ENCODE measurements at regions of chr6 and their contacts with region 1.

Region 1: DNA sequence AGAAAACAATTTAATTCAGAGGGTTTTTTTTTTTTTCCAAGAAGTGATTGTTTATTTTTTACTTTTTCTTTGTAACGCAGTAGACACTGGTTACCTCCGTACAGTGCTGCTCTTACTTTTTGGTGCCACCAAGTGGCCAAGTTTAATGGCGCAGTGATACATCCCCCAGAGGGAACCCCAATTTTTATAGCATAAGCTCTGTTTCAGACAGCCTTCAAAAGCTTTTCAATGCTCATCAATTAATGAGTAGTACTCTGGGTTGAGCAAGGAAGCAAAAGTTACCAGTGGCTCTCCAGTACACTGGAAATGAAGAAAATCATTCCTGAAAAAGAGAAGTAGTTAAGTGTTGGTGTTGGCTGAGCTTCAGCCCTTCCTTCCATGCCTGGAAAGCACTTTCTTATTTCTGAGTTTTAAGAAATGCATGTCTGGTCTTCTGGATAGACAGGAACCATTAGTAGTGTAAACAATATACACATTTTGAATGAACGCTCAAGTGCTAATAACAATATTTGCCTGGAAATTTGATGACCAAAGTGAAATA is 129.1 kb upstream of the SMLR1 start:
- DNase-seq: peak; percentile 75
- ATAC-seq: peak; percentile 98
- H3K4me3 Mint-ChIP-seq: no peak overlapping the region
- H3K27ac Mint-ChIP-seq: no peak overlapping the region
- H3K4me1 Mint-ChIP-seq: peaks cover 12% of the 10 kb centered on the region
- H3K27me3 Mint-ChIP-seq: no peaks in the 10 kb centered on the region

Region 2: DNA sequence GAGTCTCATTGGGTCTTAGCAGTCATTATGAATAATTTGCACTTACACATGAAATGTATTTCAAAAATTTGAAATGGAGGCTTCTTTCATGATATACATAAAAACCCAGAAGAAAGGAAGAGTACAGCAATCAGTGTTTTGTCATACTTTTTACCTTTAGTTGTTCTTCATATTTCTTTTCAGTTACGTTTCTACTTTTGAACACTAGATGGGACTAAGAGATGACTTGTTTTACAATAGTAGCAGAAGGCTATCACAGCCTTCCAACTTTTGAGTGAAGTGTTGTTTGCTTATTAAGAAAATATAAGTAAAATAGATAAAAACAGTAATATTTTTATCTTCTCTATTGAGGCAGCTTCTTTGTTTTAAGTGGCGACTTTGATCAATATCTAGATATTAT is 621.6 kb before region 1 on chr6:
- CTCF ChIA-PET with region 1: no interaction called
- POLR2A ChIA-PET with region 1: no interaction called
- intact Hi-C with region 1: loop called in 1 of 2 experiments (anchors 10 kb)
- DNase-seq: no peak
- ATAC-seq: no peak
- H3K4me3 Mint-ChIP-seq: no peak overlapping the region
- H3K27ac Mint-ChIP-seq: no peak overlapping the region
- H3K4me1 Mint-ChIP-seq: peaks cover 13% of the 10 kb centered on the region
- H3K27me3 Mint-ChIP-seq: no peaks in the 10 kb centered on the region

Region 3: DNA sequence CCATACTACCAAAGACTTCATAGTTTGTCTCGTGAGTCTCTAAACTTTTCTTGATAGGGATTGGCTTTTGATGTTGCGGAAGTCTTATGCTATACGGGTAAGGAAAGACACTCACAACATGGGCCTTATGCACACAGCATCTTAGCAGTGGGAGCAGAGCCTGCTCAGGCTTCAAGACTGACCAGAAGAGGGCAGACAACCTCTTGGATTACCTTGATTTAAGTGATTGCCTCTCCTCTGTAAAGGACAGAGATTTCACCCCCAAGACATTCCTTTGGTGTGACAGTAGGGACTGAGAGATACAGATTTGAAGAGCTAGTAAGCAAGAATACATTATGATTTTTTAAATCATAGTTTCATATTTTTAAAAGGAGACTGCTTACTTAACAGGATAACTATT is 404.3 kb before region 1 on chr6:
- CTCF ChIA-PET with region 1: interaction called, 5 read pairs
- POLR2A ChIA-PET with region 1: no interaction called
- intact Hi-C with region 1: loop called in 1 of 2 experiments (anchors 1 kb)
- DNase-seq: peak; percentile 47
- ATAC-seq: peak; percentile 58
- H3K4me3 Mint-ChIP-seq: no peak overlapping the region
- H3K27ac Mint-ChIP-seq: no peak overlapping the region
- H3K4me1 Mint-ChIP-seq: no peaks in the 10 kb centered on the region
- H3K27me3 Mint-ChIP-seq: no peaks in the 10 kb centered on the region

Region 4: DNA sequence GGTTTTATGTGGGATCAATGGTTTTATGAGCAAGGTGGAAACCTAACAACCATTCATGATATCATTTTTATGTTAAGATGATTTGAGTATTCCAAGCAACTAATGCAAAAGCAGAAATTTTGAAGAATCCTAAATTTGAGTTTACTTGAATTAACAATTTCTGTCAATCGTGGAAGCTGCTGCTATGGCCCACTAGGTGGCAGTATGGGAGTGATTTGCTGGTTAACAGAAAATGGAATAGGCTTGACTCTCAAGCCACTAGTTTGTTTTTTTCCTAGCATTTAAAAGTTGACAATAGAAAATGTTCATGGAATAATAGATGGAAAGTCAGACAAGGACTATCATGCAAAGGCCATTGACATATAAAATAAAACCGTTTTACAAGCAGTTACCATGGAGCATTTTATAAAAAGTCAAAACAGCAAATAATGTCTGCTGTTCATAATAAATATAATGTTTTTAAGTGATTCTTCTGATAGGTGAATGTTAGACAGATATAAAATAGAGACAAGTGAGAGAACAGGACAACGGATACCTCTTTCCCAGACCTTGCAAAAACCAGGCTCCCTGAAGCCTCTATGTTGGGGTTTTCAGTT is 375.3 kb before region 1 on chr6:
- CTCF ChIA-PET with region 1: interaction called, 35 read pairs
- POLR2A ChIA-PET with region 1: no interaction called
- intact Hi-C with region 1: loop called (anchors 1 kb)
- DNase-seq: peak; percentile 63
- ATAC-seq: no peak
- H3K4me3 Mint-ChIP-seq: no peak overlapping the region
- H3K27ac Mint-ChIP-seq: no peak overlapping the region
- H3K4me1 Mint-ChIP-seq: no peaks in the 10 kb centered on the region
- H3K27me3 Mint-ChIP-seq: no peaks in the 10 kb centered on the region

Region 5: DNA sequence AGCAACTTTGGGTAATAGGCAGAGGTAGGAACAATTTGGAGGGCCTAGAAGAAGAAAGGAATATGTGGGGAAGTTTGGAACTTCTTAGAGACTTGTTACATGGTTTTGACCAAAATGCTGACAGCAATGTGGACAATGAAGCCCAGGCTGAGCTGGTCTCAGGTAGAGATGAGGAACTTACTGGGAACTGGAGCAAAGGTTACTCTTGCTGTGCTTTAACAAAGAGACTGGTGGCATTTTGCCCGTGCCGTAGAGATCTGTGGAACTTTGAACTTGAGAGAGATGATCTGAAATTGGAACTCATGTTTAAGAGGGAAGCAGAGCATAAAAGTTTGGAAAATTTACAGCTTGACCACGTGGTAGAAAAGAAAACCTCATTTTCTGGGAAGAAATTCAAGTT is 360.5 kb before region 1 on chr6:
- CTCF ChIA-PET with region 1: no interaction called
- POLR2A ChIA-PET with region 1: no interaction called
- intact Hi-C with region 1: no loop called
- DNase-seq: no peak
- ATAC-seq: no peak
- H3K4me3 Mint-ChIP-seq: no peak overlapping the region
- H3K27ac Mint-ChIP-seq: no peak overlapping the region
- H3K4me1 Mint-ChIP-seq: no peaks in the 10 kb centered on the region
- H3K27me3 Mint-ChIP-seq: no peaks in the 10 kb centered on the region

Region 6: DNA sequence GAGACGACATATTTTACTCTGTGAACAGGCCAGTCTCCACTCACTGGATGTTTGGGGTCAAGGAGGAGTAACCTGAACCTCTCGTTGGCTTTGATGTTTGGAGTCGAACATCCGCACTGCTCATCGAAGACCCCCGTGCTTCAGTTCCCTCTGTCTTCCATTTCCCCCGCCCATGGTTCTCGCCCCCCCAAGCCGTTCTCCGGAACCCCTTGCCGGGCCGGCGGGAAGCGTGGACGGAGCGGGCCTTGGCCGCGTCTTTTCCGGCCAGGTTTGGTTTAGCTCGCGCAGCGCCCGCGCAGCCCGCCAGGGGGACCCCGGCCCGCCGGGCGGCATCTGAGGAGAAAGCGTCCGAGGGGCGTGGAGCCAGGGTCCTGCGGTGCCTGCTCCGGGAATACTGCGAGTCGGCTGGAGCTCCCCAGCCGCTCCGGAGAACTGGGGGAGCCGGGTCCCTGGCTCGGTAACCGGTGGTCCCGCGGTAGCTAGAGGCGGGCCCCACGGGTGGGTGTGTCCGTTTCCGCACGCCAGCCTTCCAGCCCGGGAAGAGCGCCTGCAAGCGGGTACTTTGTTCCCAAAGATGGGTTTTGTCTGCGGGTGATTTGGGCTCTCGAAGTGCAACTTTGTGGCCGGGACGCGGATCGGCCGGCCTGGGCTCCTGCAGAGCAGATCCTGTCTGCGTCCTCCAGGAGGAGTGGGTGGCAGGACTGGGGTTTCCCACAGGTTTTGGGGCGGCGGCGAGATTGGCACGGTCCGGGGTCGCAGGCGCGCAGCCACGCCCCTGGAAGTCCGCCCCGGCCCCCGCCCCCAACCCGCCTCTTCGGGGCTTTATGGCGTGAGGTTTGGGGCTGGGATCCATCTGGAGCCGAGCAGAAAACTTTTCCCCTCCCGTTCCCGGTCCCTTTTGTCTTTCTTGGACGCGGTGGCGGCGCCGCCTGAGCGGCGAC is 332.6 kb before region 1 on chr6 and contains the start of gene TMEM200A:
- CTCF ChIA-PET with region 1: interaction called, 6 read pairs
- POLR2A ChIA-PET with region 1: no interaction called
- intact Hi-C with region 1: loop called (anchors 1 to 2 kb)
- DNase-seq: peak; percentile 67
- ATAC-seq: peak; percentile 77
- H3K4me3 Mint-ChIP-seq: peak within 1 kb of the TSS; percentile 47
- H3K27ac Mint-ChIP-seq: no peak within 1 kb of the TSS
- H3K4me1 Mint-ChIP-seq: peaks cover 20% of the 10 kb centered on the region
- H3K27me3 Mint-ChIP-seq: peaks cover 16% of the 10 kb centered on the region
- total RNA-seq, gene TMEM200A: 0.14 to 0.21 TPM

Region 7: GRCh38 chr6:130647246-130647645 is 50.8 kb before region 1 on chr6:
- CTCF ChIA-PET with region 1: no interaction called
- POLR2A ChIA-PET with region 1: no interaction called
- intact Hi-C with region 1: no loop called
- DNase-seq: no peak
- ATAC-seq: no peak
- H3K4me3 Mint-ChIP-seq: no peak overlapping the region
- H3K27ac Mint-ChIP-seq: no peak overlapping the region
- H3K4me1 Mint-ChIP-seq: no peaks in the 10 kb centered on the region
- H3K27me3 Mint-ChIP-seq: no peaks in the 10 kb centered on the region

Region 8: GRCh38 chr6:130843575-130844320 is 145.7 kb after region 1 on chr6:
- CTCF ChIA-PET with region 1: interaction called, 5 read pairs
- POLR2A ChIA-PET with region 1: no interaction called
- intact Hi-C with region 1: loop called (anchors 5 kb)
- DNase-seq: no peak
- ATAC-seq: peak; percentile 60
- H3K4me3 Mint-ChIP-seq: no peak overlapping the region
- H3K27ac Mint-ChIP-seq: no peak overlapping the region
- H3K4me1 Mint-ChIP-seq: peaks cover 2% of the 10 kb centered on the region
- H3K27me3 Mint-ChIP-seq: no peaks in the 10 kb centered on the region